ENCODE measurements at regions of chr6 and their contacts with region 1.

Region 1: GRCh38 chr6:113564371-113565161 is 292.6 kb upstream of the MARCKS start:
- DNase-seq: peak; percentile 55 to 94 (median 86)
- H3K4me3 ChIP-seq: peak overlapping the region; percentile 3 to 66 (median 43)
- H3K27ac ChIP-seq: peak overlapping the region in 49 of 59 donors; percentile 1 to 85 (median 64)
- H3K27me3 ChIP-seq: no peaks in the 10 kb centered on the region
- CTCF ChIP-seq: peak in 48 of 56 donors; percentile 18 to 62 (median 42)

Region 2: GRCh38 chr6:113172531-113172966 is 392.0 kb before region 1 on chr6:
- intact Hi-C with region 1: loop called in 1 of 2 experiments (anchors 10 kb)
- DNase-seq: peak; percentile 46 to 92 (median 74)
- H3K4me3 ChIP-seq: peak overlapping the region in 5 of 59 donors; percentile 1 to 43 (median 5)
- H3K27ac ChIP-seq: peak overlapping the region in 50 of 59 donors; percentile 1 to 81 (median 56)
- H3K27me3 ChIP-seq: no peaks in the 10 kb centered on the region
- CTCF ChIP-seq: peak in 6 of 56 donors; percentile 7 to 36 (median 17)

Region 3: GRCh38 chr6:113732384-113732966 is 167.9 kb after region 1 on chr6:
- intact Hi-C with region 1: loop called in 1 of 2 experiments (anchors 2 kb)
- DNase-seq: peak in 7 of 10 donors; percentile 20 to 59 (median 42)
- H3K4me3 ChIP-seq: peak overlapping the region in 21 of 59 donors; percentile 1 to 48 (median 18)
- H3K27ac ChIP-seq: peak overlapping the region in 8 of 59 donors; percentile 2 to 48 (median 34)
- H3K27me3 ChIP-seq: peaks cover 0 to under 1% (median 0%) of the 10 kb centered on the region in 45 donors
- CTCF ChIP-seq: peak in 19 of 56 donors; percentile 8 to 45 (median 24)

Region 4: GRCh38 chr6:113755449-113756289 is 191.1 kb after region 1 on chr6:
- intact Hi-C with region 1: no loop called
- DNase-seq: no peak
- H3K4me3 ChIP-seq: no peak overlapping the region
- H3K27ac ChIP-seq: no peak overlapping the region
- H3K27me3 ChIP-seq: no peaks in the 10 kb centered on the region
- CTCF ChIP-seq: no peak

Measured in dorsolateral prefrontal cortex (tissue), 120 donors.